ENCODE measurements at regions of chr19 and their contacts with region 1.

Region 1: DNA sequence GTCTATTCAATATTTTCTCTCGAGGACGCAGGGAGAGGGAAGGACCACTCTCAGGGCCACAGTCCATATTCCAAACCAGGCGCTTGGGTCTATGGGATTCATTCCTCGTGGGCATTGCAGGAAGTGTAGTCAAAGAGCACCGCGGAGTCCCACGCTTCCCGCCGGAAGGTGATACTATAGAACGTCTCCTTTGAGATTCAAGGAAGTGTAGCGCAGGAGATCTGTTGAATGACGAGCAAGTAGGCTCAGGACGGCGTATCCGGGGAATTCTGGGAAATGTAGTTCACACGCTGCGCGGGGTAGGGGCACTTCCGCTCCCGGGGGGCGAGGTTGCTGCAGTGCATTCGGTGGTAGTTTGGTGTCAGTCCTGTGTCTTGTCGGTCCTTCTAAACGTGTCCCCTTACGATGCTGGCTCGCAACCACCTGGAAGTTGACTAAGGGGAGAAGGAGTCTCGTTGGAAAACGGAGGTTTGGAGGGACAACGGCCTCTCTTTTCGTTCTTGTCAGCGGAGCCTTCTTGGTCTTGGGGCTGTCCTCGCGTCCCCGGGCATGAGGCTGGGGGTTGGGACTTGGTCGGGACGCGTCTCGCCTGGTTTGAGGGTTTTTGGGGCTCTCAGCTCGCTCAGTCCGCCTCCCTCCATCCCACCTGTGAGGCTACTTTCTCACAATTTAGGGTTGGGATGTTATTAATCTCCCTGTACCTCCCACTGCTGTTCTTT is at the start of gene ZNF284:
- DNase-seq: peak; percentile 89
- ATAC-seq: peak; percentile 100
- H3K4me3 ChIP-seq: peak within 1 kb of the TSS; percentile 68 to 89 (median 76)
- H3K4me3 Mint-ChIP-seq: peak within 1 kb of the TSS; percentile 89
- H3K27ac ChIP-seq: peak within 1 kb of the TSS; percentile 32 to 47
- H3K27ac Mint-ChIP-seq: peak within 1 kb of the TSS; percentile 76
- H3K4me1 ChIP-seq: peaks cover 13 to 16% of the 10 kb centered on the region in 2 donors
- H3K4me1 Mint-ChIP-seq: peaks cover 25% of the 10 kb centered on the region
- H3K27me3 ChIP-seq: no peaks in the 10 kb centered on the region
- H3K27me3 Mint-ChIP-seq: no peaks in the 10 kb centered on the region
- CTCF ChIP-seq: no peak
- total RNA-seq, gene ZNF284: 3.3 and 4.9 TPM in 2 replicates

Region 2: DNA sequence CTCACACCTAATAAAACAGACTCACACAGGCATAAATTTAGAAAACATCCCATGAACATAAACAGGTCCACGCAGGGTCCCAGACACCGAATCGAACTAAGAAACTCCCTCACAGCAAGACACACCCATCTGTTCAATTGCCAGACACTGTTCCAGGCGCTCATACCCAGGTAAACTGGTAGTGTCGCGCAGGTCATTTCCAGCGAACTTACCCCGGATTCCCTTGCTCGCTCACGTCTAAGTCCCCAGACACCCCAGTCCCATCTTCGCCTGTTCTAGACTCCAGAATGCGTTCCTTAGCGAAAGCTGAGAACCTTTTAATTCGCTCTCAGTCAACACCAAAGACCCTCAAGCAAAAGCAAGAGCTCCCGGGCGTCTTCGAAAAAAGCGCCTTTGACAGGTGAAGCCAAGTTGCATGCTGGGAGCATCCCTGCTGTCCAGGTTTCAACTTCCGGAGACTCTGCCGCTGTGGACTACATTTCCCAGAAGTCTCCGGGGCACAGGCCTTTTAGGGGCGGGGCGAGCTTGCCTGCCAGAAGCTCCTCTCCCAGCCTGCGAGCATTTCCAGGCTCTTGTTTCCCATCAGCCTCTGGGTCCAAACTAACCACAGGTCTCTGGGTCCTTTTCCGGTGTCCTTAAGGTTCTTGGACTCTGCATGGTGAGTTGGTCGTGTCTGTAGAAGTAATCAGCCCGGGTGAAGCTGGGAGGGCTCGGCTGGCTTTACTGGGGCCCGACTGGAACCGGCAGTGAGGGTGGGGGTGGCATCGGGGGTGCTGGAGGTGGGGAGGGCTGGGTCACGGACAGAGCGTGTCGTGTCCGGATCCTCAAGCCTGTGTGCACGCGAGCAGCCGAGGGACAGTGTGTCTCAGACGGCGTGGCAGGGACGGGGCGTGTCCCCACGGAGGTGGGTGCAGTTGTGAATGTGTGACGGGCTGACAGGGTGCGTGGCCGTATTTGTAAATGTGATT is 244.9 kb before region 1 on chr19 and contains the start of gene ZNF283:
- CTCF ChIA-PET with region 1: no interaction called
- POLR2A ChIA-PET with region 1: interaction called, 4 read pairs
- intact Hi-C with region 1: loop called (anchors 10 kb)
- DNase-seq: peak; percentile 86
- ATAC-seq: peak; percentile 99
- H3K4me3 ChIP-seq: peak within 1 kb of the TSS; percentile 56 to 88 (median 69)
- H3K4me3 Mint-ChIP-seq: peak within 1 kb of the TSS; percentile 92
- H3K27ac ChIP-seq: peak within 1 kb of the TSS in 1 of 2 donors; percentile 23
- H3K27ac Mint-ChIP-seq: peak within 1 kb of the TSS; percentile 50
- H3K4me1 ChIP-seq: peaks cover 9 to 12% of the 10 kb centered on the region in 2 donors
- H3K4me1 Mint-ChIP-seq: peaks cover 17% of the 10 kb centered on the region
- H3K27me3 ChIP-seq: peaks cover 0 to under 1% (median 0%) of the 10 kb centered on the region in 4 experiments
- H3K27me3 Mint-ChIP-seq: peaks cover 11% of the 10 kb centered on the region
- CTCF ChIP-seq: no peak
- total RNA-seq, gene ZNF283: 20.8 and 23.3 TPM in 2 replicates

Region 3: GRCh38 chr19:43872547-43873336 is 199.2 kb before region 1 on chr19:
- CTCF ChIA-PET with region 1: no interaction called
- POLR2A ChIA-PET with region 1: no interaction called
- intact Hi-C with region 1: no loop called
- DNase-seq: no peak
- ATAC-seq: no peak
- H3K4me3 ChIP-seq: no peak overlapping the region
- H3K4me3 Mint-ChIP-seq: no peak overlapping the region
- H3K27ac ChIP-seq: no peak overlapping the region
- H3K27ac Mint-ChIP-seq: no peak overlapping the region
- H3K4me1 ChIP-seq: no peaks in the 10 kb centered on the region
- H3K4me1 Mint-ChIP-seq: no peaks in the 10 kb centered on the region
- H3K27me3 ChIP-seq: no peaks in the 10 kb centered on the region
- H3K27me3 Mint-ChIP-seq: no peaks in the 10 kb centered on the region
- CTCF ChIP-seq: no peak

Region 4: DNA sequence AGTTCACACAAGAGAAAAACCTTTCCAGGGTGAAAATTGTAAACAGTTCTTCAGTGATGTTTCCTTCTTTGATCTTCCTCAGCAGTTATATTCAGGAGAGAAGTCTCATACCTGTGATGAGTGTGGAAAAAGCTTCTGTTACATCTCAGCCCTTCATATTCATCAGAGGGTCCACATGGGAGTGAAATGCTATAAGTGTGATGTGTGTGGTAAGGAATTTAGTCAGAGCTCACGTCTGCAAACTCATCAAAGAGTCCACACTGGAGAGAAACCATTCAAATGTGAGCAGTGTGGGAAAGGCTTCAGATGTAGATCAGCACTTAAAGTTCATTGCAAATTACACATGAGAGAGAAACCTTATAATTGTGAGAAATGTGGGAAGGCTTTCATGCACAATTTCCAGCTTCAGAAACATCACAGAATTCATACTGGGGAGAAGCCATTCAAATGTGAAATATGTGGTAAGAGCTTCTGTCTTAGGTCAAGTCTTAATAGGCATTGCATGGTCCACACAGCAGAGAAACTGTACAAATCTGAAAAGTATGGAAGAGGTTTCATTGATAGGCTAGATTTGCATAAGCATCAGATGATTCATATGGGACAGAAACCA is 39.9 kb before region 1 on chr19:
- CTCF ChIA-PET with region 1: no interaction called
- POLR2A ChIA-PET with region 1: no interaction called
- intact Hi-C with region 1: no loop called
- DNase-seq: no peak
- ATAC-seq: no peak
- H3K4me3 ChIP-seq: peak overlapping the region in 1 of 5 experiments; percentile 18
- H3K4me3 Mint-ChIP-seq: no peak overlapping the region
- H3K27ac ChIP-seq: no peak overlapping the region
- H3K27ac Mint-ChIP-seq: no peak overlapping the region
- H3K4me1 ChIP-seq: no peaks in the 10 kb centered on the region
- H3K4me1 Mint-ChIP-seq: peaks cover 1% of the 10 kb centered on the region
- H3K27me3 ChIP-seq: no peaks in the 10 kb centered on the region
- H3K27me3 Mint-ChIP-seq: no peaks in the 10 kb centered on the region
- CTCF ChIP-seq: no peak

Region 5: GRCh38 chr19:44051654-44052402 is 20.2 kb before region 1 on chr19 and contains the start of gene ZNF223:
- CTCF ChIA-PET with region 1: no interaction called
- POLR2A ChIA-PET with region 1: no interaction called
- intact Hi-C with region 1: loop called (anchors 1 kb)
- DNase-seq: peak; percentile 59
- ATAC-seq: peak; percentile 90
- H3K4me3 ChIP-seq: peak within 1 kb of the TSS; percentile 62 to 79 (median 73)
- H3K4me3 Mint-ChIP-seq: peak within 1 kb of the TSS; percentile 97
- H3K27ac ChIP-seq: peak within 1 kb of the TSS in 1 of 2 donors; percentile 53
- H3K27ac Mint-ChIP-seq: peak within 1 kb of the TSS; percentile 82
- H3K4me1 ChIP-seq: peaks cover 13 to 22% of the 10 kb centered on the region in 2 donors
- H3K4me1 Mint-ChIP-seq: peaks cover 27% of the 10 kb centered on the region
- H3K27me3 ChIP-seq: peaks cover 0 to 3% (median 0%) of the 10 kb centered on the region in 4 experiments
- H3K27me3 Mint-ChIP-seq: peaks cover 16% of the 10 kb centered on the region
- CTCF ChIP-seq: no peak
- total RNA-seq, gene ZNF223: 7.3 and 9.5 TPM in 2 replicates

Region 6: GRCh38 chr19:44113138-44113783 is 41.3 kb after region 1 on chr19 and contains the start of gene ZNF225:
- CTCF ChIA-PET with region 1: no interaction called
- POLR2A ChIA-PET with region 1: no interaction called
- intact Hi-C with region 1: loop called (anchors 1 kb)
- DNase-seq: peak; percentile 91
- ATAC-seq: peak; percentile 95
- H3K4me3 ChIP-seq: peak within 1 kb of the TSS; percentile 71 to 98 (median 86)
- H3K4me3 Mint-ChIP-seq: peak within 1 kb of the TSS; percentile 99
- H3K27ac ChIP-seq: peak within 1 kb of the TSS; percentile 45 to 65
- H3K27ac Mint-ChIP-seq: peak within 1 kb of the TSS; percentile 90
- H3K4me1 ChIP-seq: peaks cover 9 to 19% of the 10 kb centered on the region in 2 donors
- H3K4me1 Mint-ChIP-seq: peaks cover 28% of the 10 kb centered on the region
- H3K27me3 ChIP-seq: no peaks in the 10 kb centered on the region
- H3K27me3 Mint-ChIP-seq: no peaks in the 10 kb centered on the region
- CTCF ChIP-seq: no peak
- total RNA-seq, gene ZNF225: 12.1 and 13.1 TPM in 2 replicates

Region 7: DNA sequence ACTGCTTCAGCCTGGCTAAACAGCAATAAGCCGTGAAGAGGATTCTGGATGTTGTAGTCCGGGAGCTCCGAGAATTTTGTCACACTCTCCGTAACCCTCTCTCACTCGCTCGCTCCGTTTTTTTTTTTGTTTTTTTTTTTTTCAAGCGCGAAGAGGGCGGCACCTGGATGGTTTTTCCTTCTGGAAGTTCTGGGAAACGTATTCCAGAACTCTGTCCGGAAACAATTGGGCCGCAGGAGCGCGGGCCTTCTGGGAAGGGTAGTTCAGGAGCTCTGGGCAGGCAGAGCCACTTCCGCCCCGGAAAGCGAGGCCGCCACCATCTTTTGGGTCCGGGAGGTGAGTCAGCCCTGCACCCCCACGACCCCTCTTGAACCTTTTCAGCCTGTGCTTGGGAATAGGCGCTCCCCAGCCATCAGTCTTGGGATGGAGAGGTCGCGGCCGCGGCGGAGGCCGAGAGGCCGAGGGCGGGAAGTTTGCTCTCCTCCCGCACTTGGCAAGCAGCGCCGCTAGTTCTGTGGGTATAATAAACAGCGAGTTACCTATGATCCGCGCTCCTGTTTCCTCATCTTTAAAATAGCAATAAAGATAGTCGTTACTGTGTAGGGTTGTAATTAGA is 140.4 kb after region 1 on chr19 and contains the start of gene ZNF227:
- CTCF ChIA-PET with region 1: no interaction called
- POLR2A ChIA-PET with region 1: interaction called, 9 read pairs
- intact Hi-C with region 1: loop called (anchors 1 kb)
- DNase-seq: peak; percentile 85
- ATAC-seq: peak; percentile 94
- H3K4me3 ChIP-seq: peak within 1 kb of the TSS; percentile 85 to 93 (median 88)
- H3K4me3 Mint-ChIP-seq: peak within 1 kb of the TSS; percentile 96
- H3K27ac ChIP-seq: peak within 1 kb of the TSS; percentile 48 to 77
- H3K27ac Mint-ChIP-seq: peak within 1 kb of the TSS; percentile 93
- H3K4me1 ChIP-seq: peaks cover 14 to 15% of the 10 kb centered on the region in 2 donors
- H3K4me1 Mint-ChIP-seq: peaks cover 21% of the 10 kb centered on the region
- H3K27me3 ChIP-seq: no peaks in the 10 kb centered on the region
- H3K27me3 Mint-ChIP-seq: no peaks in the 10 kb centered on the region
- CTCF ChIP-seq: no peak
- total RNA-seq, gene ZNF227: 49.5 and 53.0 TPM in 2 replicates